ENCODE measurements at regions of chr13 and their contacts with region 1.

Region 1: DNA sequence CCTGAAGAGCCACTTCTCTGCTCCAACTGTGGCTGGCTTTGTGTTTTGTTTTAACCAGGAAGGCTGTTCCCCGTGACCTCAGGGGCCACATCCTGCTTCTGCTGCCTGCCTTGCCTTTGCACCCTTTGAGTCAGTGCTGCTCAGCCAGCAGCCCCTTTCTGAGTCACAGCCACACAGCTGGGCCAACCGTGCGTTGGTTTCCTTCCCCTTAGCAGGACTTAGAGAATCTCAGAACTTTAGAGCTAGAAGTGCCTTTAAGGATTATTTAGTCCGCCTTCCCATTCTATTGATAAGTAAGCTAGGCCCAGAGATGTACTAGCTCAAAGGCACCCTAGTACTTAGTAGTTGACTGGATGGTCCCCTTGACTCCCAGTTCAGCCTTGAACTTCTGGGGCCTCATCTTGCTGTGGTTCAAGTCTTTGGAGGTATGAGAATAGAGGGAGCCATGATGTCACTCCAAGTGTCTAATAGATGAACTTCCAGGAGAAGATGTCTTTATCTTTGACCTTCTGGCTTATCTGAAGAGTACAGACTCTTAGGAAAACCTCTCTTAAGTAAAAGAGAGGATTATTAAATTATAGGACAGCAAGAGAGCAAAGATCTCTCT is 8.0 kb downstream of the RGCC start:
- DNase-seq: peak; percentile 88
- H3K4me3 Mint-ChIP-seq: peak overlapping the region; percentile 76
- H3K27ac Mint-ChIP-seq: peak overlapping the region; percentile 92
- H3K4me1 Mint-ChIP-seq: peaks cover 69% of the 10 kb centered on the region
- H3K27me3 Mint-ChIP-seq: no peaks in the 10 kb centered on the region

Region 2: GRCh38 chr13:41402681-41403511 is 62.4 kb before region 1 on chr13:
- intact Hi-C with region 1: no loop called
- DNase-seq: no peak
- H3K4me3 Mint-ChIP-seq: no peak overlapping the region
- H3K27ac Mint-ChIP-seq: no peak overlapping the region
- H3K4me1 Mint-ChIP-seq: no peaks in the 10 kb centered on the region
- H3K27me3 Mint-ChIP-seq: peaks cover 11% of the 10 kb centered on the region

Region 3: GRCh38 chr13:41492404-41493260 is 27.3 kb after region 1 on chr13:
- intact Hi-C with region 1: loop called (anchors 1 kb)
- DNase-seq: no peak
- H3K4me3 Mint-ChIP-seq: no peak overlapping the region
- H3K27ac Mint-ChIP-seq: peak overlapping the region; percentile 86
- H3K4me1 Mint-ChIP-seq: peaks cover 46% of the 10 kb centered on the region
- H3K27me3 Mint-ChIP-seq: no peaks in the 10 kb centered on the region

Region 4: GRCh38 chr13:41554626-41555386 is 89.5 kb after region 1 on chr13:
- intact Hi-C with region 1: loop called (anchors 1 kb)
- DNase-seq: no peak
- H3K4me3 Mint-ChIP-seq: no peak overlapping the region
- H3K27ac Mint-ChIP-seq: no peak overlapping the region
- H3K4me1 Mint-ChIP-seq: peaks cover 9% of the 10 kb centered on the region
- H3K27me3 Mint-ChIP-seq: no peaks in the 10 kb centered on the region

Measured in activated T-helper 2 cell treated with anti-CD3 and anti-CD28 coated beads, Interferon-gamma antibody, Interleukin-2, Interleukin-4, amounts not matched to agents 10 μg/mL and 5 μg/mL and 100 μg/mL, durations not matched to agents 14 hours and 24 hours and 36 hours (primary cell).